AG04449 (cell line): ENCODE measurements at regions of chr22 and their contacts with region 1.

Region 1: GRCh38 chr22:38766076-38766777 is 10.4 kb upstream of the SUN2 start:
- DNase-seq: no peak
- H3K4me3 ChIP-seq: no peak overlapping the region
- CTCF ChIP-seq: peak; percentile 92

Region 2: GRCh38 chr22:38051900-38052862 is 714.0 kb before region 1 on chr22:
- CTCF ChIA-PET with region 1: interaction called, 10 read pairs
- POLR2A ChIA-PET with region 1: no interaction called
- DNase-seq: no peak
- H3K4me3 ChIP-seq: no peak overlapping the region
- CTCF ChIP-seq: peak; percentile 79

Region 3: DNA sequence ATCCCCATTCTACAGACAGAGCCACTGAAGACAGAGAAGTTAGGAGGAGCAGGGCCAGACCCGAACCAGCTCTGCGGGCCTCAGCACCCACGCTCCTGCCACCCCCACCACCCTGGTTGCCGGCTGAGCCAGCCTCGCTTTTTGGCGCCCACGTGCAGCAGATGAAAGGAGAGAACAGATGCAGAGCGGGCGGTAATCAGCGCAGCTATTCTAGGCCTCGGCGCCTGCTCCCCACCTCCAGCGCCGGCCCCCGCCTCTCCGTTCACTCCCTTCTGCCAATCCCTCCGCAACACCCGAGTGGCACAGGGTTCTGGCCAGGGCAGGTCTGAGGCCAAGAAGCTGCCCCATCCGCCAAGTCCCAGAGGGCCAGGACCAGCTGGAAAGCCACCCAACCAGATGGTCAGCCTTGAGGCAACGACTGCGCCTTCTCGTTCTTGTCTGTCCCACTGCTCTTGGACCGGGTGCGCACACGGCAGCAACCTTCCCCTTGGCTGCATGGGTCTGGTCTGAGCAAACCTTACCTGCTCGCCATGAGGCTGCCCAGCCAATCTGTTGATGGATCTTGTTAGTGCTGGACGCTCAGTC is 11.0 kb after region 1 on chr22:
- CTCF ChIA-PET with region 1: interaction called, 137 read pairs
- POLR2A ChIA-PET with region 1: no interaction called
- DNase-seq: no peak
- H3K4me3 ChIP-seq: no peak overlapping the region
- CTCF ChIP-seq: no peak

Region 4: DNA sequence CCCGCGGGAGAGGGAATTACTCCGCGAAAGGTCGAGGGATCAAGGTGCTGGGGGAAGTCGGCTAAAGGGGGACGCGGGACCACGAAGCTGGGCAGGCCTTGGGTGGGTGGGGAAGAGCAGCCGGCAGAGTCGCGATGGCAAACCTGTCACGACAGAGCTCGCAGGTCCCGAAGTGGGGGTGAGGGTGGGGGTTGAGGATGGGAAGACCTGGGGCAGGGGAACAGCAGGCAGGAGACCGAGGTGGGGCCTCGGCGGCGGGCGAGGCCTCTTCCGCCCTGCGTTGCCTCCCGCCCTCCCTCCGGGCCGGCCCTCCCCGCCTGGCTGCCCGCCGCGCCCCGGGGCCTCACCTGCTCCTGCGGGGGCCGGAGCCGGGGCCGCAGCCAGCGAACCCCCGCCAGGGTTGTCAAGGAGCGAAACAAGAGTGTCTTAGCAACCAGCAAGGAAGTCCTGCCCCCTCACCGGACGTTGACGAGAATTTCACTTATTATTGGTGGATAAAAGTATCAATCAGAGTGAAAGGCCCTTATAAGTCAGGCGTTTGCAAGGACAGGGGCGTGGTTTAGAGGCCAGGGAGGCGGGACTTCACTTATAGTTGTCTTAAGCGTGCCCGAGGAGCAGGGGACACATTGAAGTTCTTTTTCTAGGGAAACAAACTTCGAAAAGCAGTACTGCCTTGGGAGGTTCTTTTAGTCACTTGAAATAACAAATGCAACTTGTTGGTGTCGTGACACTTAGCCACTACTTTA is 27.7 kb after region 1 on chr22 and contains the start of gene DNAL4:
- CTCF ChIA-PET with region 1: interaction called, 137 read pairs
- POLR2A ChIA-PET with region 1: no interaction called
- DNase-seq: peak; percentile 94
- H3K4me3 ChIP-seq: peak within 1 kb of the TSS; percentile 66
- CTCF ChIP-seq: no peak

Region 5: DNA sequence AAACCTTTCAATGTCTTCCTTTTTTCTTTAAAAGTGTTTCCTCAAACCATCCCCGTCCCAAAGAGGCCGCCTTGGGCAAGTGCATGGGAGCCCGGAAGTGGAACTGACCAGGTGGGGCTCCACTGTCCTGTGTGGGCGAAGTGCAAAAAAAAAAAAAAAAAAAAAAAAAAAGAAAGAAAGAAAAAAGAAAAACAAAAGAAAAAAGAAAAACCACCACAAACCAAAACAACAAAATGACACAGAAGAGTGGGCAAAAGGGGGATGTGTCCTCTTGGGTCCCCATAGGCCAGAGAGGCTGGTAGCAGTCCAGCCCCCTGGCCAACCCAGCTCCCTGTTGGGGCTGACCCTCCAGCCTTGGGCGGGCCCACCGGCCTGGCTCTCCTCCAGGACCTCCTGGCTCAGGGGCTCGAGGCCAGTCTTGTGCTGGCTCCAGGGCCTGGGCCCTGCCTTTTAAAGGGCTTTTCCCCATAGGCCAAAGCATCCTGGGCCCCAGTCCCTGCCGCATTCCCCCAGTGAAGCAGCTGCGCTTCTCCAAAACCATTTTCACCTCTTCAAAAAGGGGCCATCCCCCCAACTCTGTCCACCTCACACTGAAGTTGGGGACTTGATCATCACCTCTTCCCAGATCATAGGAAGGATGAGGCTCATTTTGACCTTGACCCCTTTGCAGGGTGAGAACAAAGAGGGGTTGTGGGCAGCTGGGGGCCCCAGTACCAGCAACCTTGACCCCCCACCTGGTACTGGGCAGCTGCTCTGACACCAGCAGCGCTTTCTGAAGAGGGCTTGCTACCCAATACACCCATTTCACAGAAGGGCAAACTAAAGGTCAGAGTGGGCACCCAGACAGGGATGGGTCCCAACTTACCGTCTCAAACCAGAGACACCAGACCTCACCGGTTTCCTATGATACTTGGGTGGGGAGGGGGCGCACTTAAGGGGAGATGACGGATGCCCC is 96.4 kb after region 1 on chr22:
- CTCF ChIA-PET with region 1: interaction called, 172 read pairs
- POLR2A ChIA-PET with region 1: no interaction called
- DNase-seq: no peak
- H3K4me3 ChIP-seq: no peak overlapping the region
- CTCF ChIP-seq: no peak

Region 6: DNA sequence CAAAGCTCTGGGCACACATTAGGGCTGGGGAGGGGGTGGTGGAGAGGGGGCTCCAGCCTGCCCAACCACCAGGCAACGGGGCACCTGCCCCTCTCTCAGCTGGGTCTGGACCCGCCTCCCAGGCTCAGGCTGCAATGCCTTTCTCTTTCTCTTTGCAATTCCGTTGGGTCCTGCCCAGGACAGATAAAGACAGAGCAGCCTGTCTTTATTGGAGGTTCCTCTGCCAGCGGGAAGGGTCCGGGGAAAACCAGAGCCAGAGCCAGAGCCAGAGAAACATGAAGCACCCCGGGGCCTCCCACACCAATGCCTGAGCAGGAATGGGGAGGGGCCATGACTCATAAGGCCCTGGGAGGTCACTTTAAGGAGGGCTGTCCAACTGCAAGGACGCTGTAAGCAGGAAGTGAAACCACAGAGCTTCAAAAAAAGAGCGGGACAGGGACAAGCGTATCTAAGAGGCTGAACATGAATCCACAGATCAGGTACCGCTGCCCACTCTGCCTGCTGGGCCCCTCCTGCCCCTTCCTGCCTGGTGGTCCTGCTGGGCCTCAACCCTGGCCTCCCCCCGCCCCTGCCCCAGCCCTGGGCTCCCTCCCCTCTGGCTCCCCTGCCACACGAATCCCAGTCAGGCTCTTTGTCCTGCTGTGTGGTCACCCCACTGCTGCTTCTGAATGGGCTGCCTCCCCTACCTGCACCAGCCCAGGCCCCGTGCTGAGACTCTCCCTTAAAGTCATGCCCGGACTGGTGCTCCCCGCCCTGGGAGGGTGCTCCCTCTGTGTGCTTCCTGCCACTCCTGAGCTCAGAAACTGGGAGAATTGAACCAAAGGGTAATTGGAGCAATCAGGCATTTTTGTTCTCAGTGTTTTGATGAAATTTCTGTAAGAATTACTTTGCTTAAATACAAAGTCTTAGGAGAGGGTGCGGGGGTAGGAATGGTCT is 216.0 kb after region 1 on chr22 and contains the start of gene APOBEC3B:
- CTCF ChIA-PET with region 1: interaction called, 11 read pairs
- POLR2A ChIA-PET with region 1: no interaction called
- DNase-seq: peak; percentile 73
- H3K4me3 ChIP-seq: peak within 1 kb of the TSS; percentile 52
- CTCF ChIP-seq: no peak

Region 7: GRCh38 chr22:39117585-39118191 is 351.5 kb after region 1 on chr22:
- CTCF ChIA-PET with region 1: interaction called, 15 read pairs
- POLR2A ChIA-PET with region 1: no interaction called
- DNase-seq: no peak
- H3K4me3 ChIP-seq: no peak overlapping the region
- CTCF ChIP-seq: peak; percentile 38